Activated naive CD4-positive, alpha-beta T cell treated with anti-CD3 and anti-CD28 coated beads for 36 hours (primary cell): ENCODE measurements at regions of chr22 and their contacts with region 1.

Region 1: DNA sequence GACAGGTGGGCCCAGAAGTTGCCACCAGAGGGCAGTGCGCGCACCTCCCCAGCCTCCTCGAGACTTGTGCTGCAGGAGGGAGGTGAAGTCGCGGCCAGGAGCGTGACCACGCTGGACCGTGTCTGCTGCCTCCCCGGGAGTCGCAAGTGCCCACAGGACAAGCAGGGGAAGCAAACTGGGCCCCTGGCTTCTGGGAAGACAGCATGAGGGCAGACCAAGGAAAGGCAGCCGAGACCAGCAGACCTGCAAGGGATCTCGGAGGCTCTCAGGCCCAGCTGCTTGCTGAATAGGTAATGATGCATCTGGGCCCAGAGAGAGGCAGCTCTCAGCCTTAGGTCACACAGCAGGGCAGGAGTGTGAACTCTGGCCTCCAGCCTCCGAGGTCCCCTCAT is 17.0 kb upstream of the IL2RB start:
- DNase-seq: peak; percentile 94
- H3K4me3 Mint-ChIP-seq: peak overlapping the region; percentile 66
- H3K27ac Mint-ChIP-seq: peak overlapping the region; percentile 79
- H3K4me1 Mint-ChIP-seq: peaks cover 77% of the 10 kb centered on the region
- H3K27me3 Mint-ChIP-seq: no peaks in the 10 kb centered on the region

Region 2: DNA sequence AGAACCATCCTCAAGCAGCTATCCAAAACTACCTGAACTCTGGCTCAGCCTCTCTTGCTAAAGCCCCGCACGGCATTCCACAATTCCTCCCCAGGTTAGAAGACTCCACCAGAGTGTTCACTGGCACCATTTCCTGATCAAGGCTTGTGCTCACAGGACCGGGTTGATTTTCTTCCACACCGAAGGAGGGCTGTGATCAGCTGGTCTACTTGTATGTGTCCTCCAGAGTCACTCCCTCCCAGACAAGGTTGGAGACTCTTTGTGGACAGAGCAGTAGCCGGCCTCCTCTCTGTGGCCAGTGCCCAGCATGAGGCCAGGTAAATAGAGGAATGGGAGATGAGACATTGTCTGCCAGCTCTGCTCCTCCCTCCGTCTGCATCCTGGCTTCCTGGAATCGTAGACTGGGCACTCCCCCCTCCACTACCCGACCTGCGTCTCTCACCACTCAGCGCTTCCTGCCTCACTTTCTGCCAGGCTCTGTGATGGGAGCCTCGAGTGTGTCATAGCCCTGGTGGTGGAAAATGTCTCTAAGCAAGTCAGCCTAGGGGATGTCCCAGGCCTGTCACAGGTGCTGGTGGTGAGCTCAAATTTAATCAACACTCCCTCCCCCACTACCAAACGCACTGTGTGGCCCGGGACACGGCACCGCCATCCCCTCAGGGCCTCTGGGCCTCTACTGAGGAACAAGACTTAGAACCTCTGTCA is 44.6 kb before region 1 on chr22:
- CTCF ChIA-PET with region 1: interaction called, 34 read pairs
- intact Hi-C with region 1: loop called (anchors 1 kb)
- DNase-seq: peak; percentile 98
- H3K4me3 Mint-ChIP-seq: peak overlapping the region; percentile 85
- H3K27ac Mint-ChIP-seq: peak overlapping the region; percentile 99
- H3K4me1 Mint-ChIP-seq: peaks cover 73% of the 10 kb centered on the region
- H3K27me3 Mint-ChIP-seq: no peaks in the 10 kb centered on the region

Region 3: DNA sequence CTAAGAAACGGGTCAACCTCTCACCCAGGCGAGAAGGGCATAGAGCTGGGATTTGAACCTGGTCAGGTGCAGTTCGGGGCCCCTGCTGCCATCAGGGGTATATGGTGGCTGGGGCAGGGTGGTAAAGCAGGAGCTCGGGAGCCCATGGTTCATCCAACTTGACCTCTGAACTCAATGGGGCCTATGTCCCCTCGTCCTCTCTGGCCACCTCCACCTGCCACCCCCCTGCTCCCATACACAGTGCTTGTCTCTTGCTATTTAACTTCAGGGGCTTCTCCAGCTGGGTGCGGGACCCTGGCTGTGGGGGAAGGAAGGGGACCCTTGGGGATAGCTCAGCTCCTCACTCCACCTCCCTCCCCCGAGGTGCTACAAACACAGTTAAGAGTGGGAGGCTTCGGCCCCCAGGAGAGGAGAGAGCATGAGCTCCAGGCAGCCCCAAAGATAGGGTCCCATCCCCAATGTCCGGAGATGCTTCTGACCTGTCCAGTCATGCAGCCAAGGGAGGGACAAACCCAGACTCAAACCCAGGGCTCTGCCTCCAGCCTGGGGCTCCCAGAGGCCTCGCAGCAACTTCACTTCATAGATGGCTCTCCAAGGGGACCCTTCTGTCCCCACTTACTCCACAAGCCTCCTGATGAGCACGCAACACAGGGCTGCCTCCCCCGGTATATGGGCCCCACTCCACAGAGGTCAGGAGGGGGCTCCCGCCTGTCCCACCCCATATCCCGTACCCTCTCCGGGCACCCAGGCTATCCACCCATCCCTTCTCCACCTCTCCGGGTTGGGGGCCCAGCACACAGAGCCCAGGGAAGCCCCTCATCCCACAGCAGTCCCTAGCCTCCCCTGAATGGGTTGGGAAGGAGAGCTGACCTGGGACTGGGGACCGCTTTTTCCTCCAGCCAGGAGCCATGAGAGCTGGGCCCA is 17.7 kb before region 1 on chr22:
- CTCF ChIA-PET with region 1: interaction called, 48 read pairs
- intact Hi-C with region 1: loop called (anchors 1 kb)
- DNase-seq: no peak
- H3K4me3 Mint-ChIP-seq: peak overlapping the region; percentile 87
- H3K27ac Mint-ChIP-seq: peak overlapping the region; percentile 96
- H3K4me1 Mint-ChIP-seq: peaks cover 53% of the 10 kb centered on the region
- H3K27me3 Mint-ChIP-seq: no peaks in the 10 kb centered on the region

Region 4: DNA sequence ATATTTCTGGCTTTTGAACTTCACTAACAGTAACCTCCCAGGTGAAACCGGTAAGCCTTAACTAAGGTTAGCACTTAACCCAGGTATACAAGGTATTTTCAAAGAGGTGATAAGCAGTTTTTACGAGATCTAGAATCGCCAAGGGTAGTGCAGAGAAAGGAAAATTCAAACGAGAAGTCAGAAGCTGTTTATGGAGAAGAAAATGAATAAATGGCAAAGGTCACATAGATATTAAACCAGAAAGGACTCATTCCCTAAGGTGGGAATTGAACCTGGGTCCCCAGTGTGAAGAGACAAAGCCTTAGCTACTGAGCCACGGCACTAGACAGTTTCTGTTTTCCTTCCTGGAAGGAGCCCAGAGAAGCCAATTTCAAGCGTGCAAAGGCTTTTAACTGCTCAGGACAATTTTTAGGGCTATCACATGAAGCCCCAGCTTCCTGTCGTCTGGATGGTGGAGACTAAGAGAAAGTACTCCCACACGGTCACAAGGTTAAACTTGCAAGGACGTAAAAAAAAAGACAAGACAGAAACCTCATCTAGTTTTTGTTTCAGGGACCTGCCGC is 27.0 kb after region 1 on chr22:
- CTCF ChIA-PET with region 1: interaction called, 39 read pairs
- intact Hi-C with region 1: loop called (anchors 1 kb)
- DNase-seq: peak; percentile 61
- H3K4me3 Mint-ChIP-seq: peak overlapping the region; percentile 14
- H3K27ac Mint-ChIP-seq: peak overlapping the region; percentile 65
- H3K4me1 Mint-ChIP-seq: peaks cover 45% of the 10 kb centered on the region
- H3K27me3 Mint-ChIP-seq: no peaks in the 10 kb centered on the region

Region 5: GRCh38 chr22:37260901-37261336 is 94.2 kb after region 1 on chr22:
- CTCF ChIA-PET with region 1: interaction called, 11 read pairs
- intact Hi-C with region 1: loop called (anchors 1 kb)
- DNase-seq: peak; percentile 75
- H3K4me3 Mint-ChIP-seq: no peak overlapping the region
- H3K27ac Mint-ChIP-seq: no peak overlapping the region
- H3K4me1 Mint-ChIP-seq: peaks cover 34% of the 10 kb centered on the region
- H3K27me3 Mint-ChIP-seq: no peaks in the 10 kb centered on the region

Region 6: DNA sequence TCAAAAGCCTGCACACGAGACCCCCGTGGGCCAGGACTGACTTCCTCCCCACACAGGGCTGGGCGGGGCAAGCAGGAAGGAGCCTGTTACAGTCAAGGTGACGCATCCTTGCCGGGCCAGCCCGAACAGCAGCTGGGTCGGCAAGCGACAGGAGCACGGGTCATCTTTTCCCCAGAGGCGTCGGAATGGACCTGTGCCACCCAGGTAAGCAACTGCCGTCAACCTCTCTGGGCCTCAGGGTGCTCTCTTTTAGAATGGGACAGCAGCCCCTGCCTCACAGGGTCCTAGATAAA is 115.7 kb after region 1 on chr22 and contains the start of gene CYTH4:
- CTCF ChIA-PET with region 1: no interaction called
- intact Hi-C with region 1: no loop called
- DNase-seq: peak; percentile 88
- H3K4me3 Mint-ChIP-seq: peak within 1 kb of the TSS; percentile 85
- H3K27ac Mint-ChIP-seq: peak within 1 kb of the TSS; percentile 97
- H3K4me1 Mint-ChIP-seq: peaks cover 53% of the 10 kb centered on the region
- H3K27me3 Mint-ChIP-seq: no peaks in the 10 kb centered on the region
- total RNA-seq, gene CYTH4: 30.5 to 34.0 TPM